CD8-positive, alpha-beta T cell (primary cell): ENCODE measurements at regions of chr17 and their contacts with region 1.

Region 1: DNA sequence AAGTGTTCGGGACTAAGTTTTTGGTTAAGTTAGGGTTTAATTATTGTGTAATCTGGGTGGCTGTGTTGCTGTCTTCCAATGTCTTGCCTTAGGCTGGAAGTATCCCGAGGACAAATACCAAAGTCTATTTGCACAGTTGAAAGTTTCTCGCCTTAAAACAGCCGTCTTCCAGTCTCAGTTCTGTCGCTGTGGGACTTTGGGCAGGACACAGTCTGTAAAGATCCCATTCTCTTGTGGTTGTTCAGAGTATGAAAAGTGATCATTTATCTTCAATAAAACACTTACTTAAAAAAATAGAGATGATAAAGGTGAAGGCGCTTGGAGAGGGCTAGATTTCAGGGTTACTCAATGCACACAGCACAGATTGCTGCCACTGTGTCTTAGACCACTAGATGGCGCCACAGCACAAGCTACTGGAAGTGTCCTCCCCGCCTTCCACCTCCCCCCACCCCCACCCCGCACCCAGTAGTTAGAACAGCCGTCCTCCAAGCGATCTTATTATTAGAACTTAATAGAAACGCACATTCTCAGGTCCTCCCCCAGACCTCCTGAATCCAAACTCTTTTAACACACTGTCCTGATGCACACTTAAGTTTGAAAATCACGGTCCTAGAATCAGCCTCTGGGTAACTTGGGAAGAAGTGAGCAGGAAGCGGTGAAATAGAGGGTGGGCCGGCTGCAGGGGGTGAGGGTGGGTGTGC is 45.9 kb downstream of the AKAP1 start:
- DNase-seq: peak; percentile 71 to 88 (median 85)
- ATAC-seq: peak; percentile 95
- H3K4me3 ChIP-seq: no peak overlapping the region
- H3K4me3 Mint-ChIP-seq: no peak overlapping the region
- H3K27ac ChIP-seq: no peak overlapping the region
- H3K27ac Mint-ChIP-seq: no peak overlapping the region
- H3K4me1 ChIP-seq: peaks cover 3% of the 10 kb centered on the region
- H3K4me1 Mint-ChIP-seq: peaks cover 9% of the 10 kb centered on the region
- H3K27me3 ChIP-seq: no peaks in the 10 kb centered on the region
- H3K27me3 Mint-ChIP-seq: no peaks in the 10 kb centered on the region
- CTCF ChIP-seq: peak; percentile 83

Region 2: GRCh38 chr17:57032343-57032742 is 98.6 kb before region 1 on chr17:
- CTCF ChIA-PET with region 1: no interaction called
- POLR2A ChIA-PET with region 1: no interaction called
- intact Hi-C with region 1: no loop called
- DNase-seq: no peak
- ATAC-seq: no peak
- H3K4me3 ChIP-seq: no peak overlapping the region
- H3K4me3 Mint-ChIP-seq: no peak overlapping the region
- H3K27ac ChIP-seq: no peak overlapping the region
- H3K27ac Mint-ChIP-seq: no peak overlapping the region
- H3K4me1 ChIP-seq: no peaks in the 10 kb centered on the region
- H3K4me1 Mint-ChIP-seq: no peaks in the 10 kb centered on the region
- H3K27me3 ChIP-seq: no peaks in the 10 kb centered on the region
- H3K27me3 Mint-ChIP-seq: peaks cover 33% of the 10 kb centered on the region
- CTCF ChIP-seq: no peak

Region 3: GRCh38 chr17:57518587-57519581 is 388.0 kb after region 1 on chr17:
- CTCF ChIA-PET with region 1: no interaction called
- POLR2A ChIA-PET with region 1: no interaction called
- intact Hi-C with region 1: loop called in 1 of 2 experiments (anchors 10 kb)
- DNase-seq: no peak
- ATAC-seq: no peak
- H3K4me3 ChIP-seq: no peak overlapping the region
- H3K4me3 Mint-ChIP-seq: no peak overlapping the region
- H3K27ac ChIP-seq: no peak overlapping the region
- H3K27ac Mint-ChIP-seq: no peak overlapping the region
- H3K4me1 ChIP-seq: no peaks in the 10 kb centered on the region
- H3K4me1 Mint-ChIP-seq: peaks cover 7% of the 10 kb centered on the region
- H3K27me3 ChIP-seq: no peaks in the 10 kb centered on the region
- H3K27me3 Mint-ChIP-seq: no peaks in the 10 kb centered on the region
- CTCF ChIP-seq: no peak

Region 4: DNA sequence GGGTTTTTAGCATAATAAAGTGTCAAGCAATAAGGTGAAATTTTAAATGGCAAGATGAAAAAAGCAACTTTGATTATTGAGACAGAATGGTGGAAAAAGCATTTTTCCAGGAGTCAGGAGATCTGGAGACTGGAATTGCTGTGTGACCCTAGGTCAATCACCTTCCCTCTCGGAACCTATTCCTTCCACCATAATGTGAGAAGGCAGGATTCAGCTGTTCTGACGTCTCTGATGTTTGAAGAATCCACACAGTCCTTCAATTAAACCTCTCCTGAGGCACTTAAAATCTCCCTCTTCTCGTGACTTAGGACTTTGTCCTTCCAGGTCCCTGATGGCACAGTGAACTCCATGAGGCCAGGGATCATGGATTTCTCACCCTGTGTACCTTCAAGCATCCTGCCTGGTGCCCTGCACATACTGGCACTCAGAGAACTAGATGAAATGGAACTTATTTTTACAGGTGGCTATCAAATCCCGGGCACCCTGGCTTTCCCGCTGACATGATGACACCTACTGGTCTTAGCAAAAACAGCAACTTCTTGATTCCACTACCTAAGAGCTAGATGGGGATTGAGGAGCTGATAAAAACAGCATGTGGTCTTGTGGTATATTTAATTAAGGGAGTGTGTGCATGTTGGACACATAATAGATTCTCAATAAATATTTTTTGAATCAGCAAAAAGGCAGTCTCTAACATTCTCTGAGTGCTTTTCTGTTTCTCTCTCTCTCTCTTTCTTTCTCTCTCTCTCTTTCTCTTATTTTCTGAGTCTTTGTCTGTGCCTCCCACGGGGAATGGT is 616.5 kb after region 1 on chr17:
- CTCF ChIA-PET with region 1: interaction called, 9 read pairs
- POLR2A ChIA-PET with region 1: no interaction called
- intact Hi-C with region 1: loop called (anchors 1 kb)
- DNase-seq: peak in 7 of 9 experiments; percentile 3 to 77 (median 52)
- ATAC-seq: peak; percentile 77
- H3K4me3 ChIP-seq: no peak overlapping the region
- H3K4me3 Mint-ChIP-seq: no peak overlapping the region
- H3K27ac ChIP-seq: no peak overlapping the region
- H3K27ac Mint-ChIP-seq: no peak overlapping the region
- H3K4me1 ChIP-seq: peaks cover 6% of the 10 kb centered on the region
- H3K4me1 Mint-ChIP-seq: peaks cover 10% of the 10 kb centered on the region
- H3K27me3 ChIP-seq: no peaks in the 10 kb centered on the region
- H3K27me3 Mint-ChIP-seq: no peaks in the 10 kb centered on the region
- CTCF ChIP-seq: peak; percentile 81

Region 5: GRCh38 chr17:57783106-57783742 is 652.3 kb after region 1 on chr17:
- CTCF ChIA-PET with region 1: interaction called, 18 read pairs
- POLR2A ChIA-PET with region 1: no interaction called
- intact Hi-C with region 1: loop called in 1 of 2 experiments (anchors 1 kb)
- DNase-seq: peak; percentile 53 to 85 (median 72)
- ATAC-seq: peak; percentile 91
- H3K4me3 ChIP-seq: peak overlapping the region in 1 of 2 experiments; percentile 25
- H3K4me3 Mint-ChIP-seq: no peak overlapping the region
- H3K27ac ChIP-seq: no peak overlapping the region
- H3K27ac Mint-ChIP-seq: no peak overlapping the region
- H3K4me1 ChIP-seq: peaks cover 8% of the 10 kb centered on the region
- H3K4me1 Mint-ChIP-seq: peaks cover 8% of the 10 kb centered on the region
- H3K27me3 ChIP-seq: peaks cover 3 to 6% of the 10 kb centered on the region in 2 experiments
- H3K27me3 Mint-ChIP-seq: peaks cover 16% of the 10 kb centered on the region
- CTCF ChIP-seq: peak; percentile 88